Activated B cell treated with CpG ODN at 0.5 μM for 24 hours (primary cell): ENCODE measurements at regions of chr16 and their contacts with region 1.

Region 1: DNA sequence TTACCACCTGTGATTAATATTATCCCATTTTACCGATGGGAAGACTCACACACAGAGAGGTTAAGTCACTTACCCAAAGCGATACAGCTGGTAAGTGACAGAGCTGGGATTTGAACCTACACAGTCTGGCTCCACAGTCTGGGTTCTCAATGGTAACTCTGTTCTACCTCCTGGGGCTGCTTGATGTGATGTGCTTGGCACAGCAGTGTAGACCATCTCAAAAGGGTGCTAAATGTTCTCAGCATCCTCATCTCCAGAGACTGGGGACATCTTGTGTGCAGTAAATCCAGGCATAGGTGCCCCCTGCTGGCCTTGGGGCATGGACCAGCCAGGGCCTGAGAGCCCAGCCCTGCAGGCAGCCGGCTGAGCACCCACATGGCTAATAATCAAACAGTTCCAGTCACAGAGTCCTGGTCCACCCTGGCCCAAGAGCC is 15.4 kb upstream of the KATNB1 start:
- DNase-seq: no peak
- ATAC-seq: peak; percentile 57
- H3K4me3 Mint-ChIP-seq: no peak overlapping the region
- H3K27ac Mint-ChIP-seq: no peak overlapping the region
- H3K4me1 Mint-ChIP-seq: peaks cover 3% of the 10 kb centered on the region
- H3K27me3 Mint-ChIP-seq: peaks cover 11% of the 10 kb centered on the region
- CTCF ChIP-seq: no peak

Region 2: GRCh38 chr16:57600048-57600835 is 119.9 kb before region 1 on chr16:
- CTCF ChIA-PET with region 1: interaction called, 4 read pairs
- POLR2A ChIA-PET with region 1: no interaction called
- intact Hi-C with region 1: loop called (anchors 1 kb)
- DNase-seq: no peak
- ATAC-seq: peak; percentile 71
- H3K4me3 Mint-ChIP-seq: no peak overlapping the region
- H3K27ac Mint-ChIP-seq: no peak overlapping the region
- H3K4me1 Mint-ChIP-seq: peaks cover 11% of the 10 kb centered on the region
- H3K27me3 Mint-ChIP-seq: peaks cover 14% of the 10 kb centered on the region
- CTCF ChIP-seq: no peak

Region 3: GRCh38 chr16:57656342-57656955 is 63.7 kb before region 1 on chr16:
- CTCF ChIA-PET with region 1: no interaction called
- POLR2A ChIA-PET with region 1: no interaction called
- intact Hi-C with region 1: no loop called
- DNase-seq: no peak
- ATAC-seq: no peak
- H3K4me3 Mint-ChIP-seq: no peak overlapping the region
- H3K27ac Mint-ChIP-seq: no peak overlapping the region
- H3K4me1 Mint-ChIP-seq: no peaks in the 10 kb centered on the region
- H3K27me3 Mint-ChIP-seq: peaks cover 2% of the 10 kb centered on the region
- CTCF ChIP-seq: no peak